Ovary (tissue), 10 donors: ENCODE measurements at regions of chr16 and their contacts with region 1.

Region 1: DNA sequence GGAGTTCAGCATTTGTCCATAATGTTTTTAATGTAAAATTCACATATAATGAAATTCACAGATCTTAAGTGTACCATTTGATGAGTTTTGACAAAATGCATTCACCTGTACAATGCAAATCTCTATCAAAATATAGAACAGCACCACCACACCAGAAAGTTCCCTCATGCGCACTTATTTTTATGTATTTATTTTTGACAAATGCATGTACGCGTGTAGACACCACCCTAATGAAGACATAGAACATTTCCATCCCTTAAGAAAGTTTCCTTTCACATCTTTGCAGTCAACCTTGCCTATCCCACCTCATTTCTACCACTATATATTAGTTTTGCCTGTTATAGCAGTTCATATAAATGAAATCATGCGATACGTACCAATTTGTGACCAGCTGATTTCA is 15.6 kb upstream of the IL4R start:
- DNase-seq: no peak
- H3K4me3 ChIP-seq: no peak overlapping the region
- H3K27ac ChIP-seq: no peak overlapping the region
- H3K4me1 ChIP-seq: no peaks in the 10 kb centered on the region
- H3K27me3 ChIP-seq: no peaks in the 10 kb centered on the region
- CTCF ChIP-seq: no peak
- EP300 ChIP-seq: no peak
- POLR2A ChIP-seq: no peak

Region 2: GRCh38 chr16:27583634-27584033 is 285.5 kb after region 1 on chr16:
- intact Hi-C with region 1: no loop called
- DNase-seq: no peak
- H3K4me3 ChIP-seq: no peak overlapping the region
- H3K27ac ChIP-seq: no peak overlapping the region
- H3K4me1 ChIP-seq: peaks cover 1% of the 10 kb centered on the region
- H3K27me3 ChIP-seq: no peaks in the 10 kb centered on the region
- CTCF ChIP-seq: no peak
- EP300 ChIP-seq: no peak
- POLR2A ChIP-seq: no peak

Region 3: GRCh38 chr16:28220726-28221125 is 922.6 kb after region 1 on chr16:
- intact Hi-C with region 1: loop called in 1 of 4 experiments (anchors 5 kb)
- DNase-seq: no peak
- H3K4me3 ChIP-seq: no peak overlapping the region
- H3K27ac ChIP-seq: no peak overlapping the region
- H3K4me1 ChIP-seq: no peaks in the 10 kb centered on the region
- H3K27me3 ChIP-seq: no peaks in the 10 kb centered on the region
- CTCF ChIP-seq: no peak
- EP300 ChIP-seq: no peak
- POLR2A ChIP-seq: no peak